GM12878 (cell line): ENCODE measurements at regions of chr16 and their contacts with region 1.

Region 1: GRCh38 chr16:49009204-49009603 is 272.4 kb downstream of the CBLN1 start:
- DNase-seq: no peak
- ATAC-seq: no peak
- H3K4me3 ChIP-seq: no peak overlapping the region
- H3K27ac ChIP-seq: no peak overlapping the region
- H3K4me1 ChIP-seq: no peaks in the 10 kb centered on the region
- H3K27me3 ChIP-seq: no peaks in the 10 kb centered on the region
- CTCF ChIP-seq: no peak
- EP300 ChIP-seq: no peak
- POLR2A ChIP-seq: no peak
- RAD21 ChIP-seq: no peak

Region 2: DNA sequence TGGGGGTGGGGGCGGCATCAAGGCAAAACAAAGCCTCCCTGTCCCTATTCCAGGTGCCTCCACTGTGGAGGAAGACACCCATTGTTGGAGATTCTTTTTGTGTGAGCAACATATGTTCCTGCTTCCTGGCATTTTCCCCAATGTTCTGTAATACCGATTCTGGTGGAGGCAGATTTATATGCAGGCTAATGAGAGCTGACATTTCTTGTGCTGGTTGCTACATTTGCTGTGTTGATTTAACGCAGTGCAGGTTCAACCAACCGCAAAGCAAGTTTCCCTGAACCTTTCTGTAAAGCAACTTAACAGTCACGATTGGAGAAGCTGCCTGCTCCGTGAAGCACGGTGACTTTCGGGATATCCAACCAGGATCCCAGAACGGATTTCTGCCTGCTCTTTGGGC is 11.9 kb after region 1 on chr16:
- CTCF ChIA-PET with region 1: no interaction called
- POLR2A ChIA-PET with region 1: no interaction called
- RAD21 ChIA-PET with region 1: no interaction called
- SMC1A ChIA-PET with region 1: no interaction called
- in situ Hi-C with region 1: no loop called
- intact Hi-C with region 1: no loop called
- DNase-seq: no peak
- ATAC-seq: no peak
- H3K4me3 ChIP-seq: no peak overlapping the region
- H3K27ac ChIP-seq: no peak overlapping the region
- H3K4me1 ChIP-seq: no peaks in the 10 kb centered on the region
- H3K27me3 ChIP-seq: 0 out of 4 replicates have a peak, but pooled peaks cover 0 to 2% of the 10 kb centered on the region in 2 experiments
- CTCF ChIP-seq: no peak
- EP300 ChIP-seq: no peak
- POLR2A ChIP-seq: no peak
- RAD21 ChIP-seq: no peak

Region 3: GRCh38 chr16:49340466-49340865 is 331.3 kb after region 1 on chr16:
- CTCF ChIA-PET with region 1: no interaction called
- POLR2A ChIA-PET with region 1: no interaction called
- RAD21 ChIA-PET with region 1: no interaction called
- SMC1A ChIA-PET with region 1: no interaction called
- in situ Hi-C with region 1: loop called (anchors 5 kb)
- intact Hi-C with region 1: no loop called
- DNase-seq: no peak
- ATAC-seq: no peak
- H3K4me3 ChIP-seq: no peak overlapping the region
- H3K27ac ChIP-seq: no peak overlapping the region
- H3K4me1 ChIP-seq: no peaks in the 10 kb centered on the region
- H3K27me3 ChIP-seq: no peaks in the 10 kb centered on the region; a peak in 1 of 4 replicates
- CTCF ChIP-seq: no peak
- EP300 ChIP-seq: no peak
- POLR2A ChIP-seq: no peak
- RAD21 ChIP-seq: no peak